ENCODE measurements at regions of chr3 and their contacts with region 1.

Region 1: GRCh38 chr3:122356415-122356814 is 26.6 kb downstream of the MIX23 start:
- DNase-seq: peak; percentile 72
- H3K4me3 ChIP-seq: no peak overlapping the region
- H3K27ac ChIP-seq: no peak overlapping the region
- H3K4me1 ChIP-seq: peaks cover 21% of the 10 kb centered on the region
- H3K27me3 ChIP-seq: no peaks in the 10 kb centered on the region
- CTCF ChIP-seq: peak; percentile 68 to 84

Region 2: DNA sequence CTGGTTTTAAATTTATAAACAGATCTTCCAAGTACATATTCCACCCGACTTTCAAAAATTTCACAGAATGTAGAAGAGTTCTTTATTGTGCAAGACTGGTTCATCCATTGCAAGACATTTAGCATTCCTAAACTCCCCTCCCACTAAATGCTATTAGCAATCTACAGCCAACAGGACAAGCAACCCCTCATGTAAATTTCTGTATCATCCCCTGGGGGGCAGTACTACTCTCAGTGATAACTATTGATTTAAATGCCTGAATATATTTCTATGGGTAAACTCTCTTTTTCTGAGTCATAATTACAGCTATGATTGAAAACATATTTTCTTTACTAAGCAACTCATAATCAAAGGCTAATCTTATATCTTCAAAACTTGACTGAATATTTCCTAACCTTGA is 472.9 kb before region 1 on chr3:
- CTCF ChIA-PET with region 1: no interaction called
- dilution Hi-C with region 1: no loop called
- in situ Hi-C with region 1: no loop called
- intact Hi-C with region 1: loop called (anchors 10 kb)
- DNase-seq: peak; percentile 46
- H3K4me3 ChIP-seq: no peak overlapping the region
- H3K27ac ChIP-seq: no peak overlapping the region
- H3K4me1 ChIP-seq: peaks cover 10% of the 10 kb centered on the region
- H3K27me3 ChIP-seq: no peaks in the 10 kb centered on the region
- CTCF ChIP-seq: peak; percentile 45 to 56

Region 3: GRCh38 chr3:122208579-122208978 is 147.8 kb before region 1 on chr3:
- CTCF ChIA-PET with region 1: no interaction called
- dilution Hi-C with region 1: no loop called
- in situ Hi-C with region 1: no loop called
- intact Hi-C with region 1: no loop called
- DNase-seq: no peak
- H3K4me3 ChIP-seq: no peak overlapping the region
- H3K27ac ChIP-seq: no peak overlapping the region
- H3K4me1 ChIP-seq: no peaks in the 10 kb centered on the region
- H3K27me3 ChIP-seq: peaks cover 2% of the 10 kb centered on the region
- CTCF ChIP-seq: no peak

Region 4: DNA sequence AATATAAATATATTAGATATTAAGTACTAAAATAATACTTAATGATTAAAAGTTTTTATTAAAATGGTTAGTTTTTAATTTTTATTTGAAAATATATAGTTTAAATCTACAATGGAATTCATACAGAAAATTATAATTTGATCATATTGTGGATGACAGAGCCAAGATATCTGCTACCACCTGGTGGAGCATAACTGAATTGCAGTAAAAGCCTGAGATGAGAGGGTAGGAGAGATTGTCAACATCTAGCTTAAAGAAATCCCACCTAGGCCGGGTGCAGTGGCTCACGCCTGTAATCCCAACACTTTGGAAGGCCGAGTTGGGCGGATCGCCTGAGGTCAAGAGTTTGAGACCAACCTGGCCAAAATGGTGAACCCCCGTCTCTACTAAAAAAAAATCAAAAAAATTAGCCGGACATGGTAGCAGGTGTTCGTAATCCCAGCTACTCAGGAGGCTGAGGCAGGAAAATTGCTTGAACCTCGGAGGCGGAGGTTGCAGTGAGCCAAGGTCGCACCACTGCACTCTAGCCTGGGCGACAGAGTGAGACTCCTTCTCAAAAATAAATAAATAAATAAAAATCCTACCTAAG is 56.4 kb before region 1 on chr3:
- CTCF ChIA-PET with region 1: no interaction called
- dilution Hi-C with region 1: no loop called
- in situ Hi-C with region 1: loop called (anchors 10 kb)
- intact Hi-C with region 1: no loop called
- DNase-seq: no peak
- H3K4me3 ChIP-seq: no peak overlapping the region
- H3K27ac ChIP-seq: no peak overlapping the region
- H3K4me1 ChIP-seq: no peaks in the 10 kb centered on the region
- H3K27me3 ChIP-seq: no peaks in the 10 kb centered on the region
- CTCF ChIP-seq: peak; percentile 67 to 70

Region 5: DNA sequence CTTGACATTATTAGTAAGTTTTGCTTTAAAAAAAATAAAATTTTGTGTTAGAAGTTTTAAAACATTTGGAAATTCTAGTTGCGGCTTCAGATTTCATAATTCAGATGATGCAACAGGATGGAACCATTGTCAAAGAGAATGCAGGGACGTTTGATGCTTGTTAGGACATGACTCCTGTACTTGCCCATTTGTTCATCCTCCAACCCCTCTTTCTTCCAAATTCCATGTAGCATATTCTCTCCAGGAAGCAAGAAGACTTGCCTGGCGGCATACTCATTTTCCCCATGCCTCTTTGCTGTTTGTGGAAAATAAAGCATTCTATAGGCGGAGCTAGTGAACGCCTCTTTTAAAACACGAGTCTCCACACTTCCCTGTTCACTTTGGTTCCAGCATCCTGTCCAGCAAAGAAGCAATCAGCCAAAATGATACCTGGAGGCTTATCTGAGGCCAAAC is 31.5 kb before region 1 on chr3 and contains the start of gene CSTA:
- CTCF ChIA-PET with region 1: no interaction called
- dilution Hi-C with region 1: no loop called
- in situ Hi-C with region 1: no loop called
- intact Hi-C with region 1: no loop called
- DNase-seq: peak; percentile 96
- H3K4me3 ChIP-seq: peak within 1 kb of the TSS; percentile 56 to 61 (median 57)
- H3K27ac ChIP-seq: peak within 1 kb of the TSS; percentile 93
- H3K4me1 ChIP-seq: peaks cover 16% of the 10 kb centered on the region
- H3K27me3 ChIP-seq: no peaks in the 10 kb centered on the region
- CTCF ChIP-seq: peak in 1 of 2 donors; percentile 17
- total RNA-seq, gene CSTA: 62.0 to 335 TPM

Region 6: DNA sequence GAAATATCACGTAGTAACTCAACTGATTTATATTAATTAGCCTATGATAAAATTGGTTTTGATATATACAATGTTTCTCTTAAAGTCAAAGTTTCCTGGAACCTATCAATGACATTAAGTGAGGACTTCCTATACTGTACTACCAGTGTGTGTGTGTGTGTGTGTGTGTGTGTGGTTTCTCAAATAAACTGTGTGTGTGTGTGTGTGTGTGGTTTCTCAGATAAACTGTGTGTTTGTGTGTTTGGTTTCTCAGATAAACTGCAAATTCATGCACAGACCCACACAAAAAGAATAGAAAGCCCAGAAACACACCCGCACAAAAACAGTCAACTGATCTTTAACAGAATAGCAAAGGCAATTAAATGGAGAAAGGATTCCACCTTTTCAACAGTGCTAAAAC is 74.0 kb after region 1 on chr3:
- CTCF ChIA-PET with region 1: no interaction called
- dilution Hi-C with region 1: no loop called
- in situ Hi-C with region 1: no loop called
- intact Hi-C with region 1: no loop called
- DNase-seq: no peak
- H3K4me3 ChIP-seq: no peak overlapping the region
- H3K27ac ChIP-seq: no peak overlapping the region
- H3K4me1 ChIP-seq: no peaks in the 10 kb centered on the region
- H3K27me3 ChIP-seq: no peaks in the 10 kb centered on the region
- CTCF ChIP-seq: no peak

Region 7: GRCh38 chr3:122598556-122598955 is 242.1 kb after region 1 on chr3:
- CTCF ChIA-PET with region 1: no interaction called
- dilution Hi-C with region 1: no loop called
- in situ Hi-C with region 1: no loop called
- intact Hi-C with region 1: no loop called
- DNase-seq: no peak
- H3K4me3 ChIP-seq: no peak overlapping the region
- H3K27ac ChIP-seq: no peak overlapping the region
- H3K4me1 ChIP-seq: no peaks in the 10 kb centered on the region
- H3K27me3 ChIP-seq: peaks cover 3% of the 10 kb centered on the region
- CTCF ChIP-seq: no peak